PC-9 (cell line): ENCODE measurements at regions of chr2 and their contacts with region 1.

Region 1: DNA sequence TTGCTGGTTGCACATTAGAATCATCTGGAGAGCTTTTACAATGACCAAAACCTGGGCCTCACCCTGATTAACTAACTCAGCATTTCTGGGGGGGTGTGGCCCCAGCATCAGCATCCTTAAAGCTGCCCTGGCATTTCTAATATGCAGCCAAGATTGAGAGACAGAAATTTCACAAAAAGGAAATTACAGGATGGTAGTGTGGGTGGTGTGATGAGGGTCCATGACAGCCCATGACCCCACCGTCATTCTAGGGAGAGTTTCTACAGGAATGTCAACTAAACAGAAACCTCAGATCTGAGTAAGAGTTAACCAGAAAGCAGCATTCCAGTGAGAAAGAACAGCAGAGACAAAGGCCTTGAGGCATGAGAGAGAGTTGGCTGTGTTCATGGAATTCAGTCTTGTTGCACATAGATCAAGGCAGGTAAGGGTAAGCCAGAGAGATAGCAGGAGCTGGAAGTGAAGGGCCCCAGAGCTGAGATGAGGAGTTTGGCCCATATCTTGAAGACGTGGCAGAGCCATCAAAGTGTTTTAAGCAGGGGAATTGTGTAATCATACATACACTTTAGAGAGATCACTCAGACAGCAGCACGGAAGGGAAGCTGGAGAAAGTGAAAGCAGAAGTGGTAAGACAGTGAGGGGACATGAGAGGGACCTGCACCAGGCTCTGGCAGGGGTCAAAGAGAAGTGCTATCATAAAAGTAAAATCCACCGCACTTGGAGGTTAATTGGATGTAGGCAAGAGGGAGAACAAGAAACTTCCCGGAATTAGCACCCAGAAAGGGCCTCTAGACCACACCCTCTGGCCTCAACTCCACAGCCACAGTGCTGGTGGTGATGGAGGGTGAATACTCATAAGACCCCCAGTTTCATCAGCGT is 7.8 kb upstream of the TRABD2A start:
- DNase-seq: no peak
- H3K4me3 ChIP-seq: no peak overlapping the region; the same call in 1 of the 2 replicates
- H3K27ac ChIP-seq: no peak overlapping the region
- H3K4me1 ChIP-seq: 0 out of 2 replicates have a peak, but pooled peaks cover 3% of the 10 kb centered on the region
- H3K27me3 ChIP-seq: no peaks in the 10 kb centered on the region
- CTCF ChIP-seq: no peak

Region 2: GRCh38 chr2:84919885-84920580 is 31.4 kb after region 1 on chr2:
- CTCF ChIA-PET with region 1: interaction called, 15 read pairs
- POLR2A ChIA-PET with region 1: no interaction called
- intact Hi-C with region 1: no loop called
- DNase-seq: peak; percentile 56 to 88
- H3K4me3 ChIP-seq: peak overlapping the region; percentile 27; the same call in 1 of the 2 replicates
- H3K27ac ChIP-seq: peak overlapping the region; percentile 93
- H3K4me1 ChIP-seq: peaks cover 17% of the 10 kb centered on the region
- H3K27me3 ChIP-seq: no peaks in the 10 kb centered on the region
- CTCF ChIP-seq: no peak

Region 3: GRCh38 chr2:85011747-85012146 is 123.1 kb after region 1 on chr2:
- CTCF ChIA-PET with region 1: no interaction called
- POLR2A ChIA-PET with region 1: no interaction called
- intact Hi-C with region 1: no loop called
- DNase-seq: no peak
- H3K4me3 ChIP-seq: no peak overlapping the region
- H3K27ac ChIP-seq: no peak overlapping the region
- H3K4me1 ChIP-seq: peaks cover 9% of the 10 kb centered on the region; the same call in 1 of the 2 replicates
- H3K27me3 ChIP-seq: no peaks in the 10 kb centered on the region
- CTCF ChIP-seq: no peak

Region 4: DNA sequence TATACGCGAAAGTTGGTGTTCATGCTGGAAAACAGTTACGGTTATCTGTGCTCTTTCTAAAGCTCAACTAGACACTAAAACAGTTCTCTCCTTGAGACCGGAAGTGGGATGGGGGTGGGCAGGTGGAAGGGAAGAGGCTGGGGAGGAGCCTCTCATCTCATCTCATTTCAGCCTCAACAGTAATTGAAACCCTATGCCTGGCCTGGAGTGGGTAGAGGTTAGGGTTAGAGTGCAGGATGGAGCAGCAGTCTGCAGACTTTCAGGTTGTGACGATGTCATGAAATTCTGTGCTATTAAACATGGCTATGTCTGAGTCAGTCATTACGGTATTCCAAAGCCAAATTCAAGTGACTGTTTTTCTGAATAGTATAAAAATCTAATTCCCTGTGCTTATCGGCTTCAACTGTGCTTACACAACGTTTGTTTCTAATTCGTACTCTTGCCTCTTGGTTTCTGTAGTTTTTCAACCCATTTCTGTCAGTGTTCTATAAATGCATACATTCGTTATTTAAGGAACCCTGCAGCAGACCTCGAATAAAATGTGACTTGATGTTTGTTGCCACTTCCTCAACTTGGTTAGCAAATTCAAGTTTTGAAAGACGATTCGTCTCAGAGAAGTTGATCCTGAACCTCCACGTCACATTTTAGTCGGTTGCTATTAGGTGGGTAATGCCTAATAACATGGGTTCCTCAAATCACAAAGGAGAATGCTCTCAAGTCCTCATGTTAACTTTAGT is 168.8 kb after region 1 on chr2:
- CTCF ChIA-PET with region 1: no interaction called
- POLR2A ChIA-PET with region 1: no interaction called
- intact Hi-C with region 1: no loop called
- DNase-seq: peak in 1 of 2 experiments; percentile 16
- H3K4me3 ChIP-seq: no peak overlapping the region
- H3K27ac ChIP-seq: no peak overlapping the region
- H3K4me1 ChIP-seq: peaks cover 21% of the 10 kb centered on the region
- H3K27me3 ChIP-seq: no peaks in the 10 kb centered on the region
- CTCF ChIP-seq: no peak